ENCODE measurements at regions of chr10 and their contacts with region 1.

Region 1: GRCh38 chr10:70461215-70461986 is 17.2 kb upstream of the PALD1 start:
- DNase-seq: peak; percentile 50
- ATAC-seq: peak; percentile 82
- H3K4me3 ChIP-seq: no peak overlapping the region
- H3K27ac ChIP-seq: no peak overlapping the region
- H3K4me1 ChIP-seq: peaks cover 2% of the 10 kb centered on the region; the same call in 1 of the 2 replicates
- H3K27me3 ChIP-seq: peaks cover 24% of the 10 kb centered on the region
- CTCF ChIP-seq: peak; percentile 87
- POLR2A ChIP-seq: no peak
- RAD21 ChIP-seq: peak; percentile 91

Region 2: DNA sequence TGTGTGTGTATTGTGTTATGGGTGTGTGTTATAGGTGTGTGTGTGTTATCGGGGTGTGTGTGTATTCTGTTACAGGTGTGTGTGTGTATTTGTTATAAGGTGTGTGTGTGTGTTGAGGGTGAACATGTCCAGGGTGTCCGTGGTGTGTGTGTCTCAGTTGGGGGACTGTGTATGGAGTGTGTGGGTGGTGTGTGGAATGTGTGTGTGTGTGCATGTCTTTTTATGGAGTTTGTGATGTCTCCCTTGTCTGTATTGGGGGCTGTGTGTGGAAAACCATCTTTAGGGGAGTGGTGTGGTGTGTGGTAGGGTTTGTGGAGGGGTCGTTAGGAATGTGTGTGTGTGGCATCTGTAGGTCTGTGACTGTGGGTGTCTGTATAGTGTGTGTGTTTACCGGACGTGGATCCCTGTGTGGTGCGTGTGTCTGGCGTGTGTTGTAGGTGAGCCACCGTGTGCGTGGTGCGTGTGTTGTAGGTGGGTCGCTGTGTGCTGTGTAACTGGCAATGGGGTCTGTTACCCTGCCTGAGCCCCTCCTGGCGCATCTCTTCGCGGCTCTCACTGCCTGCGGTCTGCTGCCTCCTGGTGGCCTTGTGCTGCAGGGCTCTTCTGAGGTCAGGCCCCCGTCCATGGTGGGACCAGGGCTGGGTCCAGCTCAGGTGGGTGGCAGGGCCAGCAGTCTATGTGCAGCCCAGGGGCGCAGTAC is 78.8 kb after region 1 on chr10:
- CTCF ChIA-PET with region 1: interaction called, 4 read pairs
- POLR2A ChIA-PET with region 1: no interaction called
- dilution Hi-C with region 1: no loop called
- in situ Hi-C with region 1: loop called (anchors 5 kb)
- intact Hi-C with region 1: loop called (anchors 1 kb)
- DNase-seq: no peak
- ATAC-seq: peak; percentile 68
- H3K4me3 ChIP-seq: no peak overlapping the region
- H3K27ac ChIP-seq: no peak overlapping the region
- H3K4me1 ChIP-seq: no peaks in the 10 kb centered on the region
- H3K27me3 ChIP-seq: peaks cover 29% of the 10 kb centered on the region
- CTCF ChIP-seq: peak; percentile 56
- POLR2A ChIP-seq: no peak
- RAD21 ChIP-seq: peak; percentile 66

Measured in IMR-90 (cell line).